Aorta (tissue), 5 donors: ENCODE measurements at regions of chr1 and their contacts with region 1.

Region 1: GRCh38 chr1:40404670-40405462 is 31.3 kb downstream of the SMAP2 start:
- DNase-seq: no peak
- ATAC-seq: no peak
- H3K4me3 ChIP-seq: no peak overlapping the region
- H3K27ac ChIP-seq: no peak overlapping the region
- H3K4me1 ChIP-seq: no peaks in the 10 kb centered on the region
- H3K27me3 ChIP-seq: no peaks in the 10 kb centered on the region

Region 2: GRCh38 chr1:40143891-40144575 is 260.8 kb before region 1 on chr1:
- intact Hi-C with region 1: loop called (anchors 5 kb)
- DNase-seq: peak in 1 of 2 donors; percentile 46
- ATAC-seq: peak; percentile 74
- H3K4me3 ChIP-seq: no peak overlapping the region
- H3K27ac ChIP-seq: no peak overlapping the region
- H3K4me1 ChIP-seq: no peaks in the 10 kb centered on the region
- H3K27me3 ChIP-seq: no peaks in the 10 kb centered on the region

Region 3: DNA sequence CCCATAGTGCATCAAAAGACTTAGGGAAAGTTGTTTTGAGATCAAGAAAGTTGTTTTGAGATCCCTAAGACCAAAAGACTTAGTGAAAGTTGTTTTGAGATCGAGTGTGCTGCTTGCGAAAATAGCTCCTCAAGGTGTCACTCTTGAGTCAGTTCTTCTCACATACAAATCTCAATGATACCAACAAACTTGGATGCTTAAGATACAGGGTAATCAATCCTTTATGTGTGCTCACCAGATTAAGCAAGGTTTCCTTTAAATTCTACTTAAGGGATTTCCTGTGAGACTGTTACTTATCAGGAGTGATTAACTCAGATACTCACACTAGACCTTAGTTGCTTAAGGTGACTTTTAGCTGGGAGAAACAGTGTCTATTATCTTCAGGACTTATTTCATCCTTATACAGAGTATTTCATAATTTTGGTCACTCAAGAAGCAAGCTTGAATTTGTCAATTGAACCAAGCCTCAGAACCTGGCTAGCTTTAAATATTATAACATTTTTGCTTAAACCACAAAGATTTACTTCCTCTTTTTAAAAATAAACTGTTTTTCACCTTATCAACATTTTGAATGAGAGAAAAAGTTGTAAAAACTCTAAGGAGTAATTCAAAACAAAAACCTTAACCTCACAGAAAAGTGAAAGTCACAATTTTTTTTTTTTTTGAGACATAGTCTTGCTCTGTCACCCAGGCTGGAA is 251.6 kb before region 1 on chr1:
- intact Hi-C with region 1: loop called in 1 of 2 experiments (anchors 5 kb)
- DNase-seq: no peak
- ATAC-seq: no peak
- H3K4me3 ChIP-seq: no peak overlapping the region
- H3K27ac ChIP-seq: no peak overlapping the region
- H3K4me1 ChIP-seq: no peaks in the 10 kb centered on the region
- H3K27me3 ChIP-seq: no peaks in the 10 kb centered on the region

Region 4: DNA sequence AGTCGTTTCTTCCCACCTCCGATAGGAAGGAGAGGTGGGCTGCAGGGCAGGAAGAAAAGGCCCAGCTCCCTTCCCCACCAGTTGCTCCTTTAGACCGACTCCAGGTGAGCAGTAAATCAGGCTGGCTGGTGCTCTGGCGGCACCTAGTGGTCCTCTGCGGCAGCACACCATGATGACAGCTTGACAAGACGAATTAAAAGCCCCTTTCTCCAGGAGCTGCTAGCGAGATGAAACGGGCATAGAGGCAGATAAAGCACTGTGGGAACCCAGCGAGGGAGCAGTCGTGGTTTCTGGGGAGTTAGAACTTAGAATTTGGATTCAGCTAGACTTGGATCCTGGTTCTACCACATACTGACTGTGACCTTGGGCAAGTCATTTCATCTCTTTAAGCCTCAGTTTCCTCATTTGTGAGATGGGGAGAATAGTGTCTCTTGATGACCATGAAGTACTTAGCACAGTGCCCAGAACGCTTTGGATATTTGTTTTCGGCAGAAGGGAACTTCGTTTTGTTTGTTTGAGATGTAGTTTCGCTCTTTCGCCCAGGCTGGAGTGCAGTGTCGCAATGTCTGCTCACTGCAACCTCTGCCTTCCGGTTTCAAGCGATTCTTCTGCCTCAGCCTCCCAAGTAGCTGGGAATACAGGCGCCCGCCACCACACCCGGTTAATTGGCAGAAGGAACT is 66.0 kb before region 1 on chr1:
- intact Hi-C with region 1: loop called (anchors 5 kb)
- DNase-seq: peak; percentile 82 to 92
- ATAC-seq: peak; percentile 88
- H3K4me3 ChIP-seq: no peak overlapping the region
- H3K27ac ChIP-seq: no peak overlapping the region
- H3K4me1 ChIP-seq: no peaks in the 10 kb centered on the region
- H3K27me3 ChIP-seq: no peaks in the 10 kb centered on the region

Region 5: GRCh38 chr1:40344597-40344996 is 60.3 kb before region 1 on chr1:
- intact Hi-C with region 1: loop called (anchors 5 kb)
- DNase-seq: peak in 1 of 2 donors; percentile 82
- ATAC-seq: peak; percentile 57
- H3K4me3 ChIP-seq: no peak overlapping the region
- H3K27ac ChIP-seq: no peak overlapping the region
- H3K4me1 ChIP-seq: no peaks in the 10 kb centered on the region
- H3K27me3 ChIP-seq: no peaks in the 10 kb centered on the region

Region 6: DNA sequence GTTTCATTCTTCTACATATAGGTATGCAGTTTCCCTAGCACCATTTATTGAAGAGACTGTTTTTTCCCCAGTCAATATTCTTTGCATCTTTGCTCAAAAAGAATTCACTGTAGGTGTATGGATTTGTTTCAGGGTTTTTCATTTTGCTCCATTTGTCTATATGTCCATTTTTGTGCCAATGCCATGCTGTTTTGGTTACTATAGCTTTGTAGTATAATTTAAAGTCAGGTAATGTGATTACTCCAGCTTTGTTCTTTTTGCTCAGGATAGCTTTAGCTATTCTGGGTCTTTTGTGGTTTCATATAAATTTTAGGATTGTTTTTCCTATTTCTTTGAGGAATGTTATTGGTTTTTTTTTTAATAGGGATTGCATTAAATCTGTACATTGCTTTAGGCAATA is 47.2 kb before region 1 on chr1:
- intact Hi-C with region 1: no loop called
- DNase-seq: no peak
- ATAC-seq: no peak
- H3K4me3 ChIP-seq: no peak overlapping the region
- H3K27ac ChIP-seq: no peak overlapping the region
- H3K4me1 ChIP-seq: no peaks in the 10 kb centered on the region
- H3K27me3 ChIP-seq: no peaks in the 10 kb centered on the region

Region 7: DNA sequence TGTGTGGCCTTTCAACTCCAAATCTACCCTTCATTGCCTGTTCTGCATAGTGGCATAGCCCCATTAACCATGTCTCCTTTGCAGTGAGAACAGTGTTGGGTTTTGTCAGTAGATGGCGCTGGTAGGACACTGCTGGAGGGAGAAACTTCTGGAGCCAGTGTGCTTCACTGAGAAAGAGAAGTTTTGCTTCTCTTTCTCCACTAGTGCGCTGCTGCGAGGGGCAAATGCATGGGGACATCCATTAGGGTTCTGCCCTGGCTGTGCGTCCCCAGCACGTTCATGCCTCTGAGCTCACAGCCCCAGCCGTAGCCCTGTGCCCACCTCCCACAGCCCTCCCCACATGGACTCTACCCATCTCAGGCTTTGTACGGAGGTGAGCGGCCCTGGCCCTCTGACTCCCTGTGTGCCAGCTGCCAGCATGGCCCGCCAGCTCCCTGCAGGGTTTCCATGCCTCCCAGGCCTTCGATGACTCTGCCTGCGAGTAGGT is 207.5 kb after region 1 on chr1:
- intact Hi-C with region 1: no loop called
- DNase-seq: peak in 1 of 2 donors; percentile 72
- ATAC-seq: peak; percentile 88
- H3K4me3 ChIP-seq: no peak overlapping the region
- H3K27ac ChIP-seq: no peak overlapping the region
- H3K4me1 ChIP-seq: no peaks in the 10 kb centered on the region
- H3K27me3 ChIP-seq: no peaks in the 10 kb centered on the region